Activated CD4-positive, alpha-beta memory T cell treated with anti-CD3 and anti-CD28 coated beads, Interleukin-2, amount 10 ng/mL, durations not matched to agents 7 days and 5 days (primary cell): ENCODE measurements at regions of chr6 and their contacts with region 1.

Region 1: GRCh38 chr6:26065952-26066380 is 21.3 kb upstream of the HFE start:
- DNase-seq: peak; percentile 64
- H3K4me3 Mint-ChIP-seq: no peak overlapping the region
- H3K27ac Mint-ChIP-seq: no peak overlapping the region
- H3K4me1 Mint-ChIP-seq: peaks cover 9% of the 10 kb centered on the region
- H3K27me3 Mint-ChIP-seq: peaks cover 29% of the 10 kb centered on the region

Region 2: DNA sequence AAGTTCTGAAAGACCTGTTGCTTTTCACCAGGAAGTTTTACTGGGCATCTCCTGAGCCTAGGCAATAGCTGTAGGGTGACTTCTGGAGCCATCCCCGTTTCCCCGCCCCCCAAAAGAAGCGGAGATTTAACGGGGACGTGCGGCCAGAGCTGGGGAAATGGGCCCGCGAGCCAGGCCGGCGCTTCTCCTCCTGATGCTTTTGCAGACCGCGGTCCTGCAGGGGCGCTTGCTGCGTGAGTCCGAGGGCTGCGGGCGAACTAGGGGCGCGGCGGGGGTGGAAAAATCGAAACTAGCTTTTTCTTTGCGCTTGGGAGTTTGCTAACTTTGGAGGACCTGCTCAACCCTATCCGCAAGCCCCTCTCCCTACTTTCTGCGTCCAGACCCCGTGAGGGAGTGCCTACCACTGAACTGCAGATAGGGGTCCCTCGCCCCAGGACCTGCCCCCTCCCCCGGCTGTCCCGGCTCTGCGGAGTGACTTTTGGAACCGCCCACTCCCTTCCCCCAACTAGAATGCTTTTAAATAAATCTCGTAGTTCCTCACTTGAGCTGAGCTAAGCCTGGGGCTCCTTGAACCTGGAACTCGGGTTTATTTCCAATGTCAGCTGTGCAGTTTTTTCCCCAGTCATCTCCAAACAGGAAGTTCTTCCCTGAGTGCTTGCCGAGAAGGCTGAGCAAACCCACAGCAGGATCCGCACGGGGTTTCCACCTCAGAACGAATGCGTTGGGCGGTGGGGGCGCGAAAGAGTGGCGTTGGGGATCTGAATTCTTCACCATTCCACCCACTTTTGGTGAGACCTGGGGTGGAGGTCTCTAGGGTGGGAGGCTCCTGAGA is 21.5 kb after region 1 on chr6 and contains the start of gene HFE:
- CTCF ChIA-PET with region 1: interaction called, 353 read pairs
- POLR2A ChIA-PET with region 1: interaction called, 26 read pairs
- DNase-seq: peak; percentile 37
- H3K4me3 Mint-ChIP-seq: peak within 1 kb of the TSS; percentile 77
- H3K27ac Mint-ChIP-seq: peak within 1 kb of the TSS; percentile 47
- H3K4me1 Mint-ChIP-seq: peaks cover 37% of the 10 kb centered on the region
- H3K27me3 Mint-ChIP-seq: peaks cover 8% of the 10 kb centered on the region
- total RNA-seq, gene HFE: 3.1 to 3.4 TPM